A673 (cell line): ENCODE measurements at regions of chr1 and their contacts with region 1.

Region 1: GRCh38 chr1:168178638-168179437 is at the start of gene TIPRL:
- DNase-seq: peak; percentile 99
- H3K4me3 ChIP-seq: peak within 1 kb of the TSS; percentile 85
- H3K27ac ChIP-seq: peak within 1 kb of the TSS; percentile 85
- H3K4me1 ChIP-seq: peaks cover 10% of the 10 kb centered on the region
- H3K27me3 ChIP-seq: no peaks in the 10 kb centered on the region
- CTCF ChIP-seq: peak; percentile 64
- total RNA-seq, gene TIPRL: 44.1 and 50.0 TPM in 2 replicates

Region 2: DNA sequence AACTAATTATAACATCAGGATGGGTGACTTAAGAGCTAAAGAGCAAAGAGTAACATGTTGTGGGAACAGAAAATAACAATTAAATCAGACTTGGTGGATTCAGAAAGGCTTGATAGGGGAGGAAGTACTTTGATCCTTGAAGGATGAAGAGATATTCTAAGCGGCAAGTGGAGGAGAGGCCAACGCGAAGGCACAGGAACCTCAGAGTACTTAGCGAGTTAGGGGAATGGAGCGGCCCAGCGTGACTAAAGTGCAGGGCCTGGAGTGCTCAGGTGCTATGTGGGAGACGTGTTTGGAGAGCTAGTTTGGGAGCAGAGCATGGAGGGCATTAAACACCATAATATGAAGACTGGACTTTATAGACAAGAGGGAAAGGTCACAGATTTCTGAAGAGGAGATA is 329.2 kb before region 1 on chr1:
- CTCF ChIA-PET with region 1: no interaction called
- POLR2A ChIA-PET with region 1: no interaction called
- intact Hi-C with region 1: no loop called
- DNase-seq: no peak
- H3K4me3 ChIP-seq: no peak overlapping the region
- H3K27ac ChIP-seq: no peak overlapping the region
- H3K4me1 ChIP-seq: no peaks in the 10 kb centered on the region
- H3K27me3 ChIP-seq: no peaks in the 10 kb centered on the region
- CTCF ChIP-seq: no peak

Region 3: GRCh38 chr1:168050307-168050706 is 128.5 kb before region 1 on chr1:
- CTCF ChIA-PET with region 1: interaction called, 11 read pairs
- POLR2A ChIA-PET with region 1: no interaction called
- intact Hi-C with region 1: no loop called
- DNase-seq: peak; percentile 75
- H3K4me3 ChIP-seq: no peak overlapping the region
- H3K27ac ChIP-seq: no peak overlapping the region
- H3K4me1 ChIP-seq: peaks cover 7% of the 10 kb centered on the region
- H3K27me3 ChIP-seq: no peaks in the 10 kb centered on the region
- CTCF ChIP-seq: no peak

Region 4: DNA sequence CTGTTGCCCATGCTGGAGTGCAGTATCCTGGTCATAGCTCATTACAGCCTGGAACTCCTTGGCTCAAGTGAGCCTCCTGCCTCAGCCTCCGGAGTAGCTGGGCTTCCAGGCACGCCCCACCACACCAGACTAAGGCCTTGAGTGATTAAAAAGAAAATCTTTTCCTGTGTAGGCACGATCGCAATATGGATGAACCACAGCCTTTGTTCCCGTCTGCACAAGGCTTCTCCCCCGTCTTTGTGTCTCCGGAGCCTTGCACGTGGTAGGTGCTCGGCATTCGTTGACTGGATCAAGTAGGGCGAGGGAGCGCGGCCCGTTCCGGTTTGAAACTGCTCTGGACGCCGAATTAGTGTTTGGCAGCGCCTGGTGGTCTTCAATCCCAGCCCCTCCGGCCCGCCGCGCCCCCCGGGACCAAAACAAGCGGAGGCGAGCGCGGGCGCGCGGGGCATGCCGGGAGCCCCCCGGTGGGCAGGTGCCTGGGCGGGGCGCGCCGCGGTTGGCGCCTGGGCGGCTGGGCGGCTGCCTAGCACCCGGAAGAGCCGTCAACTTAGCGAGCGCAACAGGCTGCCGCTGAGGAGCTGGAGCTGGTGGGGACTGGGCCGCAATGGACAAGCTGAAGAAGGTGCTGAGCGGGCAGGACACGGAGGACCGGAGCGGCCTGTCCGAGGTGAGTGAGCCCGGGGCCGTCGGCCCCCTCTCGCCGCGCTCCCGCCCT is 46.8 kb after region 1 on chr1 and contains the start of gene SFT2D2:
- CTCF ChIA-PET with region 1: no interaction called
- POLR2A ChIA-PET with region 1: no interaction called
- intact Hi-C with region 1: loop called (anchors 2 kb)
- DNase-seq: peak; percentile 89
- H3K4me3 ChIP-seq: peak within 1 kb of the TSS; percentile 90
- H3K27ac ChIP-seq: peak within 1 kb of the TSS; percentile 93
- H3K4me1 ChIP-seq: peaks cover 4% of the 10 kb centered on the region
- H3K27me3 ChIP-seq: no peaks in the 10 kb centered on the region
- CTCF ChIP-seq: no peak
- total RNA-seq, gene SFT2D2: 59.8 and 62.8 TPM in 2 replicates

Region 5: DNA sequence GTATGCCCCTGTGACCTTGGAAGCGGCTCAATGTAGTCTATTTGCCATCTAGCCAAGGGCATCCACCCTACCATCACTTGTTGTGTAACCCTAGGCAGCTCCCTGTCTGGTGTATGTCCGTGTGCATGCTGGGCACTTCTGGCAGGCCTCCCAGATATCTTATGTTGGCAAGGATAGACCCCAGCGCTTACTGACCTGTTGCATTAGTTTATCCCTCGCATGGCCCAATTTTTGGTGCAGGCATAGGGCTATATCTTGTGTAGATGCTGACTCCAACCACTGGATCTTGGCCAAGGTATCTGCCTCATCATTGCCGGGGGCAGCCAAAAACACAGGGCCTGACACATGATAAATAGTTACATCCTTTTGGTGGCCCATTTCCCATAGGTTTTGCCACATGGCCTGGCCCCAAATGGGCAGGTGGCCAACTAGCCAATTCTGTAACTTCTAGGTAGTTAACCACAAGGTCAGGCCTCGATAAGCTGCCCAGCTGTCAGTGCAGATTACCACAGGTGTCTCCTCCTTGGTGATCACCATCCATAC is 87.9 kb after region 1 on chr1:
- CTCF ChIA-PET with region 1: no interaction called
- POLR2A ChIA-PET with region 1: no interaction called
- intact Hi-C with region 1: no loop called
- DNase-seq: no peak
- H3K4me3 ChIP-seq: no peak overlapping the region
- H3K27ac ChIP-seq: no peak overlapping the region
- H3K4me1 ChIP-seq: no peaks in the 10 kb centered on the region
- H3K27me3 ChIP-seq: no peaks in the 10 kb centered on the region
- CTCF ChIP-seq: no peak